ENCODE measurements at regions of chr3 and their contacts with region 1.

Region 1: DNA sequence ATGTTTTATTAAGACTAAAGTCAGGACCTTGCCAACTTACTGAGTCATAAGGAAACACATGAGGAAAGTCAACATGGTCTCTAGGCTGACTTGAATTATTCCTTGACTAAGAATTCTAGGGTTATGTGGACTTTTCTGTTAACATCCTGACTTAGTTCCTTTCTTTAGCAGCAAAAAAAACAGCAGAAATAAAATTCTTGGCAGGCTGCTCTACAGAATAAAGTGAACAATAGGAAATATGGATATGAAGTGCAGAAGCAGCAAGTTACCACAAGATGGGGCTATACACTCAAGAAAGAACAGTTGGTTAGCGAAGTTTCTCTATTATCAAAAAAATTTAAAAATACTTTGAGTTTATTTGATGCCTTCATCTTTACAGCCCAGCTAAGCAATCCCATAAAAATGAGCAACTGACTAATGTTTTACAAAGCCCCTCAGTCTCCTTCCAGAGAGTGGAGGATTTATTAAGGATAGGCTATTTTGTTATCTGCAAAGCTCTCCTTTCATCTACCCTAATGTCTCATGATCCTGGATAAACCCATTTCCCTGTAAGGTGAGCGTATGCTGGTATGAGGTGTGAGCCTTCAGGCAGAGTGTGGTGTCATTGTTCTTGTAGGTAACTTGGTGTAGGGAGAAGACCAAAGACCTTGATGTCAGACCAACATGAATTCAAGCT is 23.1 kb upstream of the MCCC1 start:
- DNase-seq: peak; percentile 95
- H3K4me3 ChIP-seq: no peak overlapping the region
- H3K27ac ChIP-seq: peak overlapping the region; percentile 58
- H3K4me1 ChIP-seq: peaks cover 27% of the 10 kb centered on the region
- H3K27me3 ChIP-seq: peaks cover 3 to 4% of the 10 kb centered on the region in 2 experiments
- CTCF ChIP-seq: peak; percentile 56 to 66
- POLR2A ChIP-seq: no peak

Region 2: DNA sequence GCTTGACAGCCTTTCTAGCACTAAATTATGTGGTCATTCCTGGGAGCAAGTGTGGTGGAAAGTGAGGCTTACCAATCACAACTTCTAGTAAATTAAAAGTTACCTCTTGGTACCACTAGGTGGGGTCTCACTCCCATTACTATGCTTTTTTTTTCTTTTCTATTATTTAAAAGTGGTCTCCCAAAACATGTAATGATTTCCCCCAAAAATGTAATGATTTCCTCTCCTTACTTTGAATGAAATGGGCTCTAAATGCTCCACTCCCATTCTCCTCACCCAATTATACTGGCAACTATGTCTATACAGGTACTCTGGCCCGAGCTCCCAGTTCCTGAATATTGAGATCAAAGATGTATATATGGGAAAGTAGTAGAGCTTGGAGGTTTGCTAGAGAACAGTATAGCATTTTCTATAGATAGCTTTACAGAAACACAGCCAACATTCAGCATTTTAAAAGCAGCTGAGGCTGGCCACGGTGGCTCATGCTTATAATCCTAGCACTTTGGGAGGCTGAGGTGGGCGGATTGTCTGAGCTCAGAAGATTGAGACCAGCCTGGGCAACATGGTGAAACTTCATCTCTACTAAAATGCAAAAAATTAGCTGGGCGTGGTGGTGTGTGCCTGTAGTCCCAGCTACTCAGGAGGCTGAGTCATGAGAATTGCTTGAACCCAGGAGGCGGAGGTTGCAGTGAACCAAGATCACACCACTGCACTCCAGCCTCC is 212.9 kb before region 1 on chr3:
- CTCF ChIA-PET with region 1: interaction called, 3 read pairs
- POLR2A ChIA-PET with region 1: no interaction called
- dilution Hi-C with region 1: no loop called
- intact Hi-C with region 1: loop called (anchors 2 kb)
- DNase-seq: peak; percentile 39
- H3K4me3 ChIP-seq: no peak overlapping the region
- H3K27ac ChIP-seq: no peak overlapping the region
- H3K4me1 ChIP-seq: no peaks in the 10 kb centered on the region
- H3K27me3 ChIP-seq: no peaks in the 10 kb centered on the region
- CTCF ChIP-seq: peak; percentile 31 to 43
- POLR2A ChIP-seq: no peak

Region 3: DNA sequence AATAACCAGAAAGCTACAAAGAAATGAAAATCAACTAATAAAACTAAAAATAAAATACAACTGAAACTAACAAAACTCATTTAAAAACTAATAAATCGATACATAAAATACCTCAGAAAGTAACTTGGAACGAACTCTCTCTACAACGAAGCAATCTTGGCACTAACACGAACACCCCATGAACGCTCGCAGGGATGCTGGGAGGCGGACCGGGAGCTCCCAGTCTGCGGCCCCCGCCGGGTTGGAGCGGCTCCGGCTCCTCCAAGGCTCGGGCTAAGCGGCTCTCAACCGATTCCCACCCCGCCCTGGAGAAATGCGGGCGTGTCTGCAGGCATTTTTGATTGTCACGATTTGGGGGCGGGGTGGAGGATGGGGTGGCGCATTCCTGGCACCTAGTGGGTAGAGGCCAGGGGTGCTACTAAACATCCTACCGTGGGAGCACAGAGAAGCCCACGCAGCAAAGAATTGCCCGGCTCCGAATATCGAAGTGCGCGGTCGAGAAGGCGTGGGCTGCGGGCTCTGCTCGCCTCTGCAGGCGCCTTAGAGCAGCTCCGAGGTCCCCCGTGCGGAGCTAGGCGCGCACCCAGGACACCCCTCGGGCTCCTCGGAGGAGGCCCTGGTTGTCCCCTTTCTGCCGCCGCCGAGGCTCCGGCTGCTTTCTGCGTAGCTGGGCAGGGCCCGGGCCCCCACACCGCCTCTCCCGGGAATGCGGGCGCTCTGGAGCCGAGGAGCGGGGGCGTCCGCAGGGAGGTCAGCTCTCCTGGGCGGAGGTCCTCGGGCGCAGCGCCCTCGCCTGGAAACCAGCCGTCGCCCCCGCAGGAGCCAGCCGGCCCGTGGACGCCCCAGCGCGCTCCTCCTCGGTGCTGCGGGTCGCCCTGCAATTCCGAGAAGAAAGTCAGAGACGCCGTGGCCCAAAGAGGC is 56.5 kb after region 1 on chr3:
- CTCF ChIA-PET with region 1: interaction called, 96 read pairs
- POLR2A ChIA-PET with region 1: no interaction called
- dilution Hi-C with region 1: no loop called
- intact Hi-C with region 1: loop called (anchors 1 kb)
- DNase-seq: peak; percentile 37
- H3K4me3 ChIP-seq: peak overlapping the region; percentile 38 to 78 (median 40)
- H3K27ac ChIP-seq: peak overlapping the region; percentile 7
- H3K4me1 ChIP-seq: peaks cover 5% of the 10 kb centered on the region
- H3K27me3 ChIP-seq: peaks cover 0 to 8% of the 10 kb centered on the region in 2 experiments
- CTCF ChIP-seq: peak; percentile 32 to 42
- POLR2A ChIP-seq: no peak

Region 4: GRCh38 chr3:183285828-183286457 is 163.5 kb after region 1 on chr3:
- CTCF ChIA-PET with region 1: no interaction called
- POLR2A ChIA-PET with region 1: no interaction called
- dilution Hi-C with region 1: no loop called
- intact Hi-C with region 1: loop called (anchors 2 kb)
- DNase-seq: peak; percentile 97
- H3K4me3 ChIP-seq: peak overlapping the region in 1 of 3 experiments; percentile 10
- H3K27ac ChIP-seq: peak overlapping the region; percentile 91
- H3K4me1 ChIP-seq: peaks cover 30% of the 10 kb centered on the region
- H3K27me3 ChIP-seq: no peaks in the 10 kb centered on the region
- CTCF ChIP-seq: no peak
- POLR2A ChIP-seq: no peak

Region 5: DNA sequence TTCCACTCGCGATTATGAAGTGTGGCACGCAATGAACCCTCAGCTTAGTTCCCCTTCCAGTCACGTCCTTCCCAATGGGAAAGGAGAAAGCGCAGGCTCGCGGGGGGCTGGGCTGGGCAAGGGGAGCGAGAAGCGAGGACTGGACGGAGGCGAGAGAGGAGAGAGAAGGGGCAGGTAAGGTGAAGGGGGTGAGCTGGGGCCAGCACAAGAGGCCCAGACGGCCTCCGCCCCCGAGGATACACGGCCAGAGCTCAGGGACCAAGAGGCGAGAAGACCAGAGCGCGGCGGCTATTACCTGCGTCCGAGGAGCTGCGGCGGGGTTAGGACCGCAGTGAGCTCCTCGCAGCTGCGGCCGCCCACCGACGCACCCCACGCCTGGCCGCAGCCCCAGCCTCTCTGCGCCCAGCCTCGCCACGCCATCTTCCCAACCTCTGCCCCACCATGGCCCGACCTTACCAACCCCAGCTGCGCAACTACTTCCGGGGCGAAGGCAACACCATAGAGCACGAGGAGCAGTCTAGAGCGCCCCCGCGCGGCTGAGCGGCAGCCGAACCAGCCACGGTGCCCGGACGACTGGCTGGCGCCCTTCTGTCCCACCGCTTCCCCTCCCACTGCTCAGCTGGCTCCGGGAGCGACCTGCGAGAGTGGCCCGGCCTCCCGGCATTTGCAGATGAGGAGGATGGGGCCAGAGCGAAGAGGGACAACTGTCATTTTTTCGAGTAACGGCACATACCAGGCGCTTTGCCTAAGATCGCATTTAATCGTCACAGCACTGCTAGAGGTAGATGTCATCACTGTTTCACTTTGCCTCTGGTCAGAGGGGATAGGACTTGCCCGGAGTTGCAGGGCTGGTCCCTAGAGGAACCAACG is 762.3 kb after region 1 on chr3 and contains the start of gene PARL:
- CTCF ChIA-PET with region 1: no interaction called
- POLR2A ChIA-PET with region 1: no interaction called
- dilution Hi-C with region 1: no loop called
- intact Hi-C with region 1: loop called (anchors 5 kb)
- DNase-seq: peak; percentile 93
- H3K4me3 ChIP-seq: peak within 1 kb of the TSS; percentile 47 to 93 (median 85)
- H3K27ac ChIP-seq: peak within 1 kb of the TSS; percentile 34
- H3K4me1 ChIP-seq: peaks cover 11% of the 10 kb centered on the region
- H3K27me3 ChIP-seq: no peaks in the 10 kb centered on the region
- CTCF ChIP-seq: peak; percentile 99 to 100
- POLR2A ChIP-seq: peak; percentile 87
- total RNA-seq, gene PARL: 48.1 and 54.1 TPM in 2 replicates